Adrenal gland (tissue), 19 donors: ENCODE measurements at regions of chr15 and their contacts with region 1.

Region 1: GRCh38 chr15:88834211-88834812 is 31.1 kb downstream of the ACAN start:
- DNase-seq: peak; percentile 31 to 63 (median 46)
- H3K4me3 ChIP-seq: no peak overlapping the region
- H3K27ac ChIP-seq: no peak overlapping the region
- H3K4me1 ChIP-seq: no peaks in the 10 kb centered on the region
- H3K27me3 ChIP-seq: no peaks in the 10 kb centered on the region
- CTCF ChIP-seq: peak; percentile 27 to 82 (median 68)
- POLR2A ChIP-seq: no peak

Region 2: GRCh38 chr15:88476635-88477060 is 357.7 kb before region 1 on chr15:
- intact Hi-C with region 1: loop called in 1 of 2 experiments (anchors 5 kb)
- DNase-seq: peak; percentile 43 to 80 (median 62)
- H3K4me3 ChIP-seq: no peak overlapping the region
- H3K27ac ChIP-seq: no peak overlapping the region
- H3K4me1 ChIP-seq: peaks cover 0 to 4% of the 10 kb centered on the region in 2 donors
- H3K27me3 ChIP-seq: no peaks in the 10 kb centered on the region
- CTCF ChIP-seq: peak; percentile 31 to 79 (median 74)
- POLR2A ChIP-seq: no peak

Region 3: GRCh38 chr15:88657326-88658069 is 176.8 kb before region 1 on chr15:
- intact Hi-C with region 1: loop called (anchors 2 to 5 kb)
- DNase-seq: peak in 3 of 7 donors; percentile 45 to 63 (median 58)
- H3K4me3 ChIP-seq: no peak overlapping the region
- H3K27ac ChIP-seq: no peak overlapping the region
- H3K4me1 ChIP-seq: no peaks in the 10 kb centered on the region
- H3K27me3 ChIP-seq: no peaks in the 10 kb centered on the region
- CTCF ChIP-seq: peak; percentile 75 to 82 (median 79)
- POLR2A ChIP-seq: no peak

Region 4: GRCh38 chr15:89150762-89151664 is 316.7 kb after region 1 on chr15:
- intact Hi-C with region 1: no loop called
- DNase-seq: no peak
- H3K4me3 ChIP-seq: no peak overlapping the region
- H3K27ac ChIP-seq: no peak overlapping the region
- H3K4me1 ChIP-seq: no peaks in the 10 kb centered on the region
- H3K27me3 ChIP-seq: no peaks in the 10 kb centered on the region
- CTCF ChIP-seq: no peak
- POLR2A ChIP-seq: no peak